ENCODE measurements at regions of chr17 and their contacts with region 1.

Region 1: GRCh38 chr17:58249270-58250133 is 11.1 kb downstream of the LPO start:
- DNase-seq: peak; percentile 46 to 67 (median 66)
- H3K4me3 ChIP-seq: peak overlapping the region; percentile 30 to 79 (median 63)
- H3K27ac ChIP-seq: no peak overlapping the region
- H3K4me1 ChIP-seq: peaks cover 0 to 19% (median 15%) of the 10 kb centered on the region in 4 experiments
- H3K27me3 ChIP-seq: peaks cover 0 to 19% (median 4%) of the 10 kb centered on the region in 5 experiments

Region 2: DNA sequence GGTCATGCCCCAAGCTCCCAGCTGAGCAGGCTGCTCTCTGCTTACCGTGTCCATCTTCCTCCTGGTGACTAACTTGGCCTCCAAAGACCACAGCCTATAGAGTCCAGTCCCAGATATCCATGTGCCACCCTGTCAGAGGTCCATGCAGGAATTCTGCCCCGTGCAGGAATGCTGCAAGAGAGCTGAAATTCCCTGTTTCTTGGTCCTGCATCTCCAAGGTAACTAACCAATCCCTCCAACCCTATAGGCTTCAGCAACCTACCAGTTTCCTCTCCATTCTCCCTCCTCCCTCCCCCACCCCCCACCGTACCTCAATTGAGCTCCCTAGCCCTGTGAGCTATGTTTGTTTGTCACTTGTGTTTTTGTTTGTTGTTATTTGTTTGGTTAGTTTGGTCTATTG is 20.8 kb before region 1 on chr17:
- CTCF ChIA-PET with region 1: interaction called, 10 read pairs
- POLR2A ChIA-PET with region 1: no interaction called
- DNase-seq: no peak
- H3K4me3 ChIP-seq: no peak overlapping the region
- H3K27ac ChIP-seq: no peak overlapping the region
- H3K4me1 ChIP-seq: peaks cover 0 to 18% (median 7%) of the 10 kb centered on the region in 4 experiments
- H3K27me3 ChIP-seq: peaks cover 0 to 7% (median 0%) of the 10 kb centered on the region in 5 experiments

Measured in common myeloid progenitor, CD34-positive (primary cell).